ENCODE measurements at regions of chr9 and their contacts with region 1.

Region 1: DNA sequence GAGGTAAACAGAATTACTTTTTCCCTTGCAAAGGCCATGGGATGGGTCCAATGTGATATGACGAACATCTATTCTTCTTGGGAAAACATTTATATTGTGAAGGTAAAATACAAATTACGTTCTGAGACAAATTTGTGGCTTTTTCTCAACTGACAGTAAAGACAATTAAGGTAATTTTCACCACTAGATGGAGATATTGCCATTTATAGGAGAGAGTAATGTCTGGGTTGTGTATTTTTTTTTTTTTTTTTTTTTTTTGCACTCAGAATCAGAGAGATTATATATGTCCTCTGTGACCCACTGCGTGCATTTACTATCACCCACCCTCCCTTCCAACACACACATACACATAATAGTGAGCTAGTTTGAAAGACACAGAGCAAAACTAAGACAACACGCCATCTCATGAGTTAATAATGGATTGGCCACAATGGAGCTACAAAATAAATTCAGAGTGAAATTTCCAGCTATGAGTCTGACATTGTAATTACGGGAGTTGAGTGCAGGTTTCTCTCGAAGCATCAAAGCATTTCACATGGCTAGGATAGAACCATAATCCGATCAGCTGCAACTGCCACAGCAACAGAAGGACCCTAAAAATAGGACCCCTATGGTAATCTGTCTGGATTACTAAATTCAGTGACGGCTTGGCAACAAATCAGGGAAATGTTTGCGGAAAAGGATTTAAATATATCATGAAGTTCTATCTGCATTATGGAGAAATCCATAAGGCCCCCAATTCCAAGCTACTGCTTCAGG is 49.2 kb downstream of the ANXA1 start:
- DNase-seq: no peak
- H3K4me3 Mint-ChIP-seq: no peak overlapping the region
- H3K27ac Mint-ChIP-seq: no peak overlapping the region
- H3K4me1 Mint-ChIP-seq: no peaks in the 10 kb centered on the region
- H3K27me3 Mint-ChIP-seq: peaks cover 19% of the 10 kb centered on the region

Region 2: DNA sequence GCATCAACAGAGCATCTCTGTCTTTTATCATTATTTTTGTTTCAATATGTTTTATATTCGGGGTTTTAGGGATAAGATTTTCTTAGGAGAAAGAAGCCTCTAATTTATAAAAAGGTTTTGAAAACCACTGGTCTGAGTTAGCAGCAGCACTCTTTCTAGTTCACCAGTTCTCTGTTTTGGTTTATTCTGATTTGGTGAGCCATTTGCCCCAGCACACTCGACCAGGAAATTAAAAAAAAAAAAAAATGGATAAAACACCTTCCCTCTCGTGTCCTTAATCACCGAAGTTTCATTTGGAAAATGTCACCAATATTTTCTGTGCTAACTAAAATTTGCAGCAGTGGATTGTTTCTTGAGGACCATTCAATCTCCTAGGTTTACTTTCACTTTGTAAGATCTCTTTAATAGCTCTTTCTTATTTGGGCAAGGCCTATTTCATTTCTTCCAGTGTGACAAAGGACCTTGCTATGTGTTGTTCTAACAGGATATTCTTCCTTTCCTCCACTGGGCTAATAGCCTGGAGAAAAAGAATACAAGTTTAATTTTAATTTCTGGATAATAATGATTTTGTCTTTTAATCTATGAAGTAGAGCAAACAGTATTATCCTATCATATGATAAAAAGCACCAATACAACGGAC is 107.0 kb before region 1 on chr9:
- intact Hi-C with region 1: no loop called
- DNase-seq: no peak
- H3K4me3 Mint-ChIP-seq: peak overlapping the region; percentile 3
- H3K27ac Mint-ChIP-seq: no peak overlapping the region
- H3K4me1 Mint-ChIP-seq: no peaks in the 10 kb centered on the region
- H3K27me3 Mint-ChIP-seq: peaks cover 9% of the 10 kb centered on the region

Region 3: GRCh38 chr9:73219985-73220626 is 19.2 kb after region 1 on chr9:
- intact Hi-C with region 1: no loop called
- DNase-seq: no peak
- H3K4me3 Mint-ChIP-seq: peak overlapping the region; percentile 23
- H3K27ac Mint-ChIP-seq: peak overlapping the region; percentile 90
- H3K4me1 Mint-ChIP-seq: peaks cover 11% of the 10 kb centered on the region
- H3K27me3 Mint-ChIP-seq: peaks cover 13% of the 10 kb centered on the region

Region 4: DNA sequence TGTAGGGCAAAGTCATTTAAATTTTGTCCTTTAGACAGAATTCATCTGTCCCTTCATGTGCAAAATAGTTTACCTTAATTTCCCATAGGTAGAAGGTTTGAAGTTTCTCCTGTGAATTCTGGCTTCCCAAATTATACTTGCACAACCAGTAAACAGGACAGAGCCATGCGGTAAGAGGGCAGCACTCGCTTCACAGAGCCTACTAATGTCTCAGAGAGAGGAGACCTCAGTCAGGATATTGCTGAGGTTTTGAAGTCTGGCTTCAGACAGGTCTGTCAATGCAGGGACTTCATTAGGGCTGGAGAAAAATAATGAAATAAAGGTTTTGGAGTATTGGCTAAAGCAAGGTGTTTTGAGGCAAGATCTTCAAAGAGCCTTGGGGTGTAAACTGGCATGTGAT is 42.2 kb after region 1 on chr9:
- intact Hi-C with region 1: loop called (anchors 5 kb)
- DNase-seq: no peak
- H3K4me3 Mint-ChIP-seq: no peak overlapping the region
- H3K27ac Mint-ChIP-seq: no peak overlapping the region
- H3K4me1 Mint-ChIP-seq: no peaks in the 10 kb centered on the region
- H3K27me3 Mint-ChIP-seq: peaks cover 12% of the 10 kb centered on the region

Region 5: DNA sequence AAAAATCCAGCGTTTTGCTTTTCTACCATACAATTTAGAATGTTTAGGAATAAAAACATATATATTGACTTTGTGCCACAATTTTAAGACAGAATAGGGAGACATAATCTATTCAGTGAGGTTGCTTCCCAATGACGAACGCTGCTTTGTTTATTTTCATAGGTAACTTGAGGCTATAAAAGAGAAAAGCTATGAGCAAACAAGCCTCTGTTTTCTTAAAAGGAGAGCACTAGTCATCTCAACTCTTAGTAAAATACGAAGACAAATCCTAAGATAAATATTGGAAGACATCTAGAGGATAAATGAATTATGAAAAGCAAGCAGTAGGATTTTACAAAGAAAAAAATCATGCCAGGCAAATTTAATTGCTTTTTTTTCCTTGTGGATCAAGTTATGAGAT is 314.3 kb after region 1 on chr9:
- intact Hi-C with region 1: no loop called
- DNase-seq: no peak
- H3K4me3 Mint-ChIP-seq: no peak overlapping the region
- H3K27ac Mint-ChIP-seq: no peak overlapping the region
- H3K4me1 Mint-ChIP-seq: no peaks in the 10 kb centered on the region
- H3K27me3 Mint-ChIP-seq: no peaks in the 10 kb centered on the region

Region 6: DNA sequence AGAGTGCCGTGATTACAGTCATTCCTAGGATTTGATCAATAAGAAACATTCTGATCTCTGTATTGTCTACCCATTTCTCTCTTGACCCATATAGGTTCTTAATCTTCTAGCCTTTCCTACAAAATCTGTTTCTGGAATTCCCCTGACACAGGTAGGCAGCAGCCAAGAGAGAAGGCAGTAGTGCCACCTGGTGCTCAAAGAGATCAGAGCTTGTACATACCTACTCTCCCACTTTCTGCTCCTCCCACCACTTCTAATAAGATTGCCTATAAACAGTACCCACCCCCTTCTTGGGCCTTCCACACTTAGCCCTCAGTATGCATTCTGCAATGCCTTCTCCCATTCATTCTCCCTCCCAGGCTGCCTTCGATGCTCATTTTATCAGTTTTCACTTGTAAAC is 1178.8 kb after region 1 on chr9:
- intact Hi-C with region 1: loop called (anchors 5 kb)
- DNase-seq: peak; percentile 76
- H3K4me3 Mint-ChIP-seq: no peak overlapping the region
- H3K27ac Mint-ChIP-seq: no peak overlapping the region
- H3K4me1 Mint-ChIP-seq: peaks cover 2% of the 10 kb centered on the region
- H3K27me3 Mint-ChIP-seq: no peaks in the 10 kb centered on the region